ENCODE measurements at regions of chr3 and their contacts with region 1.

Region 1: DNA sequence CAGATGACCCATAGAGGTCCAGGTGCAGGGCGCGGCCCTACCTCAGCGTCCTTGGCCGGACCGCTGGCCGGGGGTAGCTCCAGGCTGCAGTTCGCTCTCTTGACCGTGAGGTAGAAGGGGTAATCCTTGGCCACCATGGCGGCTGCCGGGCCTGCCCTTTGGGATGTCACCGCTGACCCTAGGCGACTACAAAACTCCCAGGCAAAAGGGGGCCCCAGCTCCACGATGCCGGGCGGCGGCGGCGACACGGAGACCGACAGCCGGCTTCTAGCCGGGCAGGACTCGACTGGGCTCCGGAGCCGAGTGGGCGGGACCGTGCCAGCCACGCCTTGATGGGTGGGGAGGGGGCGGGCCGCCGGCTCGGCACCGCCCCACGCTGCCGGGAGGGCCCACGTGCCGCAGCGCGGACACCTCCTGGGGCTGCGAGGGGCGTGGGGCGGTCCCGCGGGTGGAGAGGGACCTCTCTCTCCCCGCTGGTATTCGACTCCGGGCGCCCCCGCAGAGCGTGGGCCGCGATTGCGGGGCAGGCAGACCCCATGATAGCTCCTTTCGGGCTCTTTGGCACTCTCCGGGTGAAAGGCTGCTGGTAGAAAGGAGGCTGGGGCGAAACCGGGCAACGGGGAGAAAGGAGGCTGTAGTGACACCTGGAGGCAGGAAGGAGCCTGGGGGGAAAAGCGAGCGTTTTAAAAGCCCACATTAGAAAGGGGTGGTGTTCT is at the start of gene ARHGEF3:
- DNase-seq: peak; percentile 82 to 84
- H3K4me3 ChIP-seq: peak within 1 kb of the TSS; percentile 79
- H3K4me3 Mint-ChIP-seq: peak within 1 kb of the TSS; percentile 79
- H3K27ac Mint-ChIP-seq: peak within 1 kb of the TSS; percentile 45
- H3K4me1 ChIP-seq: peaks cover 14% of the 10 kb centered on the region
- H3K4me1 Mint-ChIP-seq: no peaks in the 10 kb centered on the region
- H3K27me3 ChIP-seq: no peaks in the 10 kb centered on the region
- H3K27me3 Mint-ChIP-seq: no peaks in the 10 kb centered on the region
- CTCF ChIP-seq: peak; percentile 32 to 83
- total RNA-seq, gene ARHGEF3: 10.2 and 14.8 TPM in 2 replicates

Region 2: DNA sequence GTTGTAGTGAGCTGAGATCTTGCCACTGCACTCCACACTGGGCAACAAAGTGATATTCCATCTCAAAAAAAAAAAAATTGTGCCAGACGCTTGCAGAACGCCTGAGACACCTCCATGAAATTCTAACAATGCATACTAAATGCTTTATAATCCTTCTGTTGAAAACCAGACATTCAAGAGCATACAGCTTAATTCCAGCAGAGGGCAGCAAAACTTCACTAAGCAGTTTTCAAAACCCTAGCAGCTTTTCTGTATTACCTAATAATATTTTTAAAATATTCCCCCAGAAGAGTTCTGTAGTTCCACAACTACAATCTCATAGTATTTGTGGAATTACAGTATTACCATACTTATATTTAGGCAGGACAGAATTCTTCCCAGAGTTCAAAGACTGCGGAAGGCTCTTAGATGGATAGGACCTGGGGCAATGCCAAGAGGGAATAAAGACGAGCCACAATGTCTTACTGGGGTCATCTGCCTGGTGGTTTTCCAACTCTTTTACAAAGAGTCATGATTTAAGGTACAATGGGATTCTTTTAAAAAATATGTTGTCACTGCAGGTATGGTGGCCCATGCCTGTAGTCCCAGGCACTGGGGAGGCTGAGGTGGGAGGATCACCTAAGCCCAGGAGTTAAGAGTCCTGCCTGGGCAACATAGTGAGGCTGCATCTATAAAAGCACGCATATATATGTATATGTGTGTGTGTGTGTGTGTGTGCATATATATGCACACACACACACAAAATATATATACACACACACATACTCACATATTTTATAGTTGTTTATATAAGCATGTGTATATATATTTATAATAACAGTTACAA is 99.1 kb before region 1 on chr3:
- CTCF ChIA-PET with region 1: interaction called, 22 read pairs
- POLR2A ChIA-PET with region 1: no interaction called
- intact Hi-C with region 1: loop called (anchors 1 kb)
- DNase-seq: peak in 1 of 2 experiments; percentile 56
- H3K4me3 ChIP-seq: no peak overlapping the region
- H3K4me3 Mint-ChIP-seq: no peak overlapping the region
- H3K27ac Mint-ChIP-seq: no peak overlapping the region
- H3K4me1 ChIP-seq: peaks cover 4% of the 10 kb centered on the region; the same call in 1 of the 2 replicates
- H3K4me1 Mint-ChIP-seq: peaks cover 12% of the 10 kb centered on the region
- H3K27me3 ChIP-seq: no peaks in the 10 kb centered on the region
- H3K27me3 Mint-ChIP-seq: no peaks in the 10 kb centered on the region
- CTCF ChIP-seq: peak; percentile 68 to 76

Region 3: DNA sequence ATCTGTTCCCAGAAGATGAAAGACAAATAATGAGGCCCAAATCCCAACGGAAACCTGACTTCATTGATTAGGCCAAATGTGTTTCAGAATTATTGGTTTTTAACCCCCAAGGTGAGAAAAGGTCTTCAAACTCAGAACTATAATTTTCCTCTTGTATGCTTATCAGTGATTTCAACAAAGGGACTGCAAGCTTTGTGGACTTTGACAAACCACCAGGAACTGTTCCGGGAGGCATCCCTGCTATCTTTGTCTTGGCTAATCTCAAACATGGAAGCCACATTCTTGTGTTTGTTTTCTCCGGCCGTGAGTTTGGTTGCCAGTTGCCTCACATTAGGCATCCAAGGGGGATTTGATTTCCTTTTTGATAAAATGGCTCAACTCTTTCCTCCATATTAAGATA is 19.6 kb before region 1 on chr3:
- CTCF ChIA-PET with region 1: interaction called, 11 read pairs
- POLR2A ChIA-PET with region 1: no interaction called
- intact Hi-C with region 1: no loop called
- DNase-seq: peak; percentile 53 to 64
- H3K4me3 ChIP-seq: no peak overlapping the region
- H3K4me3 Mint-ChIP-seq: no peak overlapping the region
- H3K27ac Mint-ChIP-seq: peak overlapping the region; percentile 40
- H3K4me1 ChIP-seq: peaks cover 23% of the 10 kb centered on the region
- H3K4me1 Mint-ChIP-seq: peaks cover 25% of the 10 kb centered on the region
- H3K27me3 ChIP-seq: no peaks in the 10 kb centered on the region
- H3K27me3 Mint-ChIP-seq: no peaks in the 10 kb centered on the region
- CTCF ChIP-seq: no peak

Region 4: DNA sequence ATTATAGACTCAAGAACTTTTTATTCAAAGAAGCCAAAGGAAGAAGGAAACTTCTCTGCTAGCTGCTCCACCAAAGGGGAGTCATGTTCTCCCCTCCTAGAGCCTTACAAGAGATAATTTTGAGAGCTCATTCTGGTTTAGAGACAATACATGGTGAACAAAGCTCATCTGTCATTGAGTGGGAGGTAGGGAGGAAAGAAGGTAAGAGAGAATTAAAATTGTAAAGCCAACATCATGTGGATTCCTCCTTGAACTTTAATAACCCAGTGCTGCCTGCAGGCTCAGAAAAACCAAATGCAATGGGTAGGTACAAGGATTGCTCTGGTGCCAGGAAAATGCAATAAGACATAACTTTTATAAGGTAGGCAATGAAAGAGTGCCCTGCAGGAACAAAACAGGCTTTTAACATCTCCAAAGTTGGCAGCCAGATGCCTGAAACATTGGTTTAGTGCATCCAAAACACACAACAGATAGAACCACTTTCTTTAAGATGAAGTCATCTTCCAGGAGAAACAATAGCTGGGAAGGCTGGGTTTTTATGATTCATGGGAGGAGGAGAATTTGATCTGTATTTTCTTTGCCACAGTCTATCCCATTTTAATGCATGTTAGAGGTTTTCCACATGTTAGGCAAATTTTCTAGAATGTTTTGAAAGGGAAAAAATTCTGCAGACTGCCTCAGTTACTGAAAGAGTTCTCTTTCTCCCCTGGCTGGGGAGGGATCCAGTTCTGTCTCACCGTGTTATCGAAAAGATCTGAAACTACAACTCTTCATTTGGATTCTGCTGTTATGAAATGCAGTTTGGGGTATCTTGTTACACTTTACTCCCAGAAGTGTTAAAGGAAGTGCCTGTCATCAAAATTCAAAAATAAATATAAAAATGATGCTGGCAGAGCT is 11.2 kb after region 1 on chr3:
- CTCF ChIA-PET with region 1: interaction called, 23 read pairs
- POLR2A ChIA-PET with region 1: interaction called, 13 read pairs
- intact Hi-C with region 1: no loop called
- DNase-seq: no peak
- H3K4me3 ChIP-seq: no peak overlapping the region
- H3K4me3 Mint-ChIP-seq: no peak overlapping the region
- H3K27ac Mint-ChIP-seq: no peak overlapping the region
- H3K4me1 ChIP-seq: peaks cover 7% of the 10 kb centered on the region; the same call in 1 of the 2 replicates
- H3K4me1 Mint-ChIP-seq: peaks cover 13% of the 10 kb centered on the region
- H3K27me3 ChIP-seq: no peaks in the 10 kb centered on the region
- H3K27me3 Mint-ChIP-seq: no peaks in the 10 kb centered on the region
- CTCF ChIP-seq: no peak

Region 5: GRCh38 chr3:56823421-56824343 is 21.9 kb after region 1 on chr3:
- CTCF ChIA-PET with region 1: interaction called, 11 read pairs
- POLR2A ChIA-PET with region 1: interaction called, 13 read pairs
- intact Hi-C with region 1: loop called (anchors 1 kb)
- DNase-seq: peak in 1 of 2 experiments; percentile 35
- H3K4me3 ChIP-seq: no peak overlapping the region
- H3K4me3 Mint-ChIP-seq: peak overlapping the region; percentile 17
- H3K27ac Mint-ChIP-seq: peak overlapping the region; percentile 25
- H3K4me1 ChIP-seq: peaks cover 44% of the 10 kb centered on the region
- H3K4me1 Mint-ChIP-seq: peaks cover 31% of the 10 kb centered on the region
- H3K27me3 ChIP-seq: no peaks in the 10 kb centered on the region
- H3K27me3 Mint-ChIP-seq: no peaks in the 10 kb centered on the region
- CTCF ChIP-seq: no peak